Naive thymus-derived CD4-positive, alpha-beta T cell (primary cell): ENCODE measurements at regions of chr22 and their contacts with region 1.

Region 1: DNA sequence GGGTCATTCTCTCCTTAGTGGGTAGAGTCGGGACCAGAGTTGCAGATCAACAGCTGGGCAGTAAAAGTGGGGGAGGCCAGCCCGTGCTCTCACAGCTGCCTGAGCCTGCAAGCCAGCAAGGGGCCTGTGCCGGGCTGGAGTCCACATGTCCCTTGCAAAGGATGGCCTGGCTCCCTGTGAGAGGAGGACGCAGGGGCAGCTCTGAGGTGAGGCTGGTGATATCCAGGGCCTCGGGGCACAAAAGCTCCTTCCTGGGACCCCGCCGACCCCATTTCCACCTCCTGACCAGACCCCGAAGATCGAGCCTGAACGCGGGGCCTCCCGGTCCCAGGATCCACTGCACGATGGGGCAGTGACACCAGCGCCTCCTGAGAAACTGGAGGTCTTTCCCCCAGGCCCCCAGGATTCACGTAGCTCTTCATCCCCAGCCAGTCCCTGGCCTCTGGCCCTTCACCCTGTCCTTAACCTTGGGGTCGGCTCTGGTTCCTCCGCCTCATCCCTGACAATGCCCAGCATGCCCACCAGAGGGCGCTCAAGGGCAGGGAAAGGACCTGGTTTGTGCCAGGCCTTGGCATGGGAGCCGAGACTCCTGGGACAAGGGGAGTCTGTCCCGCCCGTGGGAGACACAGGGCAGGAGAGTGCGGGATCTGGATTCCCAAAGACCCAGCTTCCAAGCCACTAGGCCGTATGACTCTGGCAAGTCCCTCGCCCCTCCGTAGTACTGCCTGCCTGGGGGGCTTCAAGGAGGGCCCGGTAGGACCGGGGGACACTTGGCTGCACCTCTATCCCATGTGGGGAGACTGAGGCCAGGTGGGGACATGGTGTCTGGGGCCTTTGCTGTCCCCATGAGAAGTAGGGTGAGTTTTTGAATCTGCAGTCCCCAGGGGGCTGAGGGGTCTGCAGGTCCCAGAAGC is 17.8 kb upstream of the WNT7B start:
- DNase-seq: peak; percentile 52 to 87 (median 69)
- ATAC-seq: peak; percentile 61
- H3K4me3 ChIP-seq: no peak overlapping the region
- H3K4me3 Mint-ChIP-seq: no peak overlapping the region
- H3K27ac ChIP-seq: no peak overlapping the region
- H3K27ac Mint-ChIP-seq: peak overlapping the region in 2 of 9 donors; percentile 30 to 64
- H3K4me1 ChIP-seq: peaks cover 0 to 6% of the 10 kb centered on the region in 2 donors
- H3K4me1 Mint-ChIP-seq: peaks cover 0 to 13% (median 3%) of the 10 kb centered on the region in 7 donors
- H3K27me3 ChIP-seq: no peaks in the 10 kb centered on the region
- H3K27me3 Mint-ChIP-seq: peaks cover 0 to 10% (median 4%) of the 10 kb centered on the region in 5 donors

Region 2: GRCh38 chr22:45911601-45912271 is 83.0 kb before region 1 on chr22:
- CTCF ChIA-PET with region 1: no interaction called
- POLR2A ChIA-PET with region 1: no interaction called
- intact Hi-C with region 1: no loop called
- DNase-seq: no peak
- ATAC-seq: peak; percentile 23
- H3K4me3 ChIP-seq: no peak overlapping the region
- H3K4me3 Mint-ChIP-seq: no peak overlapping the region
- H3K27ac ChIP-seq: no peak overlapping the region
- H3K27ac Mint-ChIP-seq: no peak overlapping the region
- H3K4me1 ChIP-seq: no peaks in the 10 kb centered on the region
- H3K4me1 Mint-ChIP-seq: peaks cover 0 to 13% (median 0%) of the 10 kb centered on the region in 7 donors
- H3K27me3 ChIP-seq: no peaks in the 10 kb centered on the region
- H3K27me3 Mint-ChIP-seq: peaks cover 0 to 14% (median 5%) of the 10 kb centered on the region in 5 donors

Region 3: GRCh38 chr22:46116491-46116958 is 121.8 kb after region 1 on chr22:
- CTCF ChIA-PET with region 1: interaction called, 20 read pairs
- POLR2A ChIA-PET with region 1: no interaction called
- intact Hi-C with region 1: loop called in 1 of 2 experiments (anchors 1 kb)
- DNase-seq: peak; percentile 58 to 87 (median 80)
- ATAC-seq: peak; percentile 98
- H3K4me3 ChIP-seq: no peak overlapping the region
- H3K4me3 Mint-ChIP-seq: no peak overlapping the region
- H3K27ac ChIP-seq: no peak overlapping the region
- H3K27ac Mint-ChIP-seq: no peak overlapping the region
- H3K4me1 ChIP-seq: peaks cover 0 to 4% of the 10 kb centered on the region in 2 donors
- H3K4me1 Mint-ChIP-seq: peaks cover 0 to 6% (median 0%) of the 10 kb centered on the region in 7 donors
- H3K27me3 ChIP-seq: no peaks in the 10 kb centered on the region
- H3K27me3 Mint-ChIP-seq: no peaks in the 10 kb centered on the region

Region 4: GRCh38 chr22:46309526-46310085 is 314.9 kb after region 1 on chr22:
- CTCF ChIA-PET with region 1: interaction called, 5 read pairs
- POLR2A ChIA-PET with region 1: no interaction called
- intact Hi-C with region 1: loop called in 1 of 2 experiments (anchors 1 kb)
- DNase-seq: no peak
- ATAC-seq: no peak
- H3K4me3 ChIP-seq: no peak overlapping the region
- H3K4me3 Mint-ChIP-seq: no peak overlapping the region
- H3K27ac ChIP-seq: no peak overlapping the region
- H3K27ac Mint-ChIP-seq: peak overlapping the region in 1 of 9 donors; percentile 86
- H3K4me1 ChIP-seq: no peaks in the 10 kb centered on the region
- H3K4me1 Mint-ChIP-seq: peaks cover 0 to 13% (median 0%) of the 10 kb centered on the region in 7 donors
- H3K27me3 ChIP-seq: no peaks in the 10 kb centered on the region
- H3K27me3 Mint-ChIP-seq: no peaks in the 10 kb centered on the region

Region 5: DNA sequence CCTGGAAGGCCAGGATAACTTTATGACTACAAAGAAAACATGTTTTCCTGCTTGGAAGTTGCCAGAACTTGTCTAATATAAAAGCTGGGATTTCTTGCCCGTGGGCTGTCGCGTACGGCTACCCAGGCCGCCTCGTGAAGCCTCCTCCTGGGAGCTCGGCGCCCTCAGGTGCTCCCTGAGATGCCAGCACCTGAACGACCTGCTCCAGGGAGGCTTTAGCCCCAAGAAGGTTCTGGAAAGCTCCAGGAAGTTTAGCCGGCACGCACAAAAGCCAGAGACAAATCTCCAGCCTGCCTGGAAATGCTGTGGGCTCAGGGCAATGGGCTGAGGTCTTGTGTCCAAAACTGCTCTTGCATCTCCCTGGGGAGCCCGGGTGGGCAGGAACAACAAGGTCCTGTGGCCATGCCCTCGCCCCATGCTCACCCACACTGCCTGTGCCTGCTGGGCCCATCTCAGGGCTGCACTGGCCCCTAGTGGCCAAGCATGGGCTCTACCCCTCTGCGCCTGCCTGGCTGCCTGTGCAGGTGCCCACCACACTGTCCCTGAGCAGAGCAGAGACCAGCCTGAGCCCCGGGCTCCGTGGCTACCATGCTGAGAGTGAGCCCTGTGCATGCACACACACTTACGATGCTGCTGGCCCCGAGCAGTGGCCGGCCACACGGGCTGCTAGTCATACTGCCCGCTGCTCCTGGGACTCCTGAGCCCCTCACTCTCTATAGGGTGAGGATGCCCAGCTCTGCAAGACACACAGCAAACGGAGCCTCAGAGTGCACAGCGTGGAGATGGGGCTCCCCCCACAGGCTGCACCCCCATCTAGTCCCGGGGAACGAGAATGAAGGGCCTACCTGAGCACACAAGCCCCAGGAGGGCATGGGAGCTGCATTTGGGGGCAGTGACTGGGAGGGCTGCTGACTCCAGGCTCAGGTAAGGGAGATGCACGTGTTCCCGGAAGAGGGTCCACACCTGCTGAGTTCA is 547.5 kb after region 1 on chr22:
- CTCF ChIA-PET with region 1: interaction called, 3 read pairs
- POLR2A ChIA-PET with region 1: no interaction called
- intact Hi-C with region 1: loop called in 1 of 2 experiments (anchors 2 kb)
- DNase-seq: peak; percentile 35 to 76 (median 66)
- ATAC-seq: peak; percentile 99
- H3K4me3 ChIP-seq: no peak overlapping the region
- H3K4me3 Mint-ChIP-seq: no peak overlapping the region
- H3K27ac ChIP-seq: no peak overlapping the region
- H3K27ac Mint-ChIP-seq: no peak overlapping the region
- H3K4me1 ChIP-seq: peaks cover 8% of the 10 kb centered on the region in 2 donors
- H3K4me1 Mint-ChIP-seq: peaks cover 0 to 12% (median 8%) of the 10 kb centered on the region in 7 donors
- H3K27me3 ChIP-seq: no peaks in the 10 kb centered on the region
- H3K27me3 Mint-ChIP-seq: peaks cover 19 to 32% (median 29%) of the 10 kb centered on the region in 5 donors